CD4-positive, alpha-beta memory T cell (primary cell): ENCODE measurements at regions of chr3 and their contacts with region 1.

Region 1: DNA sequence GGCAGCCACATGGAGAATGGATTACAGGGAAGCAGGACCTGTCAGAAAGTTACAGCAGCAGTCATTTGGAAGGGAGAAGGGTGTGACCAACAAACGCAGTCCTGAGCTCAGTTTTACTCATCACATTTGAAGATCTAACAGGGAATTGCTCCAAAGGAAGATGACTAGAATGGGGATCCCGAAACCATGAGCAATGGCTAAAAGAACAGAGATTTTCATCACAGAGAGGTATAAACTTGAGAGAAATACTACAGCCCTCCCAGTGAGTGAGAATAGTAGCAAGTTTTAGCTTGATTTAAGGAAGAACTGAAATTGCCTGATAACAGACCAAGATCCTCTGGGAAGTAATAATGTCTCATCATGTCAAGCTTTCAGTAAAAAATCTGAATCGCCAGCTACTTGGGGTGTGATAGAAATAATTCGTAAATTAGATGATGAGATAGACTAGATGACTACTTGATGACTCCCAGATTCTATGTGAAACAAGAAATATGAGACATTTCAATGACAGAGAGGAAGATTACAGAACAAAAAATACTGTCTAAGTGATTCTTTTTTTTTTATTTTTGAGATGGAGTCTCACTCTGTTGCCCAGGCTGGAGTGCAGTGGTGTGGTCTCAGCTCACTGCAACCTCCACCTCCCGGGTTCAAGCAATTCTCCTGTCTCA is 16.9 kb downstream of the CD47 start:
- DNase-seq: no peak
- H3K4me3 ChIP-seq: no peak overlapping the region
- H3K4me3 Mint-ChIP-seq: peak overlapping the region in 5 of 8 donors; percentile 19 to 60 (median 29)
- H3K27ac ChIP-seq: no peak overlapping the region
- H3K27ac Mint-ChIP-seq: peak overlapping the region; percentile 28 to 83 (median 67)
- H3K4me1 ChIP-seq: peaks cover 91% of the 10 kb centered on the region
- H3K4me1 Mint-ChIP-seq: peaks cover 64 to 93% (median 69%) of the 10 kb centered on the region in 4 donors
- H3K27me3 ChIP-seq: no peaks in the 10 kb centered on the region
- H3K27me3 Mint-ChIP-seq: no peaks in the 10 kb centered on the region

Region 2: DNA sequence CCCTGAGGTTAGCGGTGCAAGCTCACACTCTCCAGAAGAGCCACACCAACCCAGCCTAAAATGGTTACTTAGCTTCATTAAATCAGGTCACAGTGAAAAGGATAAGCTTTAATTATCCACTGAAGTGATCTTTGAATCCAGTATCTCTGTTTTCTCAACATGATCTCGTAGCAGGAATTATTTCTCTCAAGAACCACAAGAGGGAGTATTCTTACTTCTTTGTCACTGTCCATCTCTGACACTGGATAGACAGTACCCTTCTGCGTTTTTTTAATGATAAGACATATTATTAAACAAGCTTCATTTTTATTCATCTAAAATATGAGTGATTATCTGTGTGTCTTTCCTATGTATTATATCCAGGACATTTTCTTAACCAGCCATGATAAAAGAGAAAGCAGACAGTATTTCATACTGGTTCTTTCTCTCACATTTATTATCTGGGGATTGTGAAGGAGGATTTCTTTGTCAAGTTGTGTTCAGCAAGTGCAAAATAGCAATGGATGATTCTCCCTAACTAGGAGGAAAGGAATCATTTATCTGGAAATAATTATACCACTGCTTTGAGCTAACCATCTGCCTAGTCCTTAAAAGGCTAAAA is 802.0 kb before region 1 on chr3:
- CTCF ChIA-PET with region 1: no interaction called
- POLR2A ChIA-PET with region 1: no interaction called
- intact Hi-C with region 1: no loop called
- DNase-seq: peak in 4 of 5 donors; percentile 15 to 27 (median 21)
- H3K4me3 ChIP-seq: no peak overlapping the region
- H3K4me3 Mint-ChIP-seq: no peak overlapping the region
- H3K27ac ChIP-seq: no peak overlapping the region
- H3K27ac Mint-ChIP-seq: no peak overlapping the region
- H3K4me1 ChIP-seq: no peaks in the 10 kb centered on the region
- H3K4me1 Mint-ChIP-seq: no peaks in the 10 kb centered on the region
- H3K27me3 ChIP-seq: no peaks in the 10 kb centered on the region
- H3K27me3 Mint-ChIP-seq: peaks cover 10 to 24% of the 10 kb centered on the region in 2 donors

Region 3: GRCh38 chr3:108040481-108040880 is 33.4 kb before region 1 on chr3:
- CTCF ChIA-PET with region 1: no interaction called
- POLR2A ChIA-PET with region 1: no interaction called
- intact Hi-C with region 1: no loop called
- DNase-seq: no peak
- H3K4me3 ChIP-seq: no peak overlapping the region
- H3K4me3 Mint-ChIP-seq: no peak overlapping the region
- H3K27ac ChIP-seq: no peak overlapping the region
- H3K27ac Mint-ChIP-seq: peak overlapping the region in 3 of 7 donors; percentile 42 to 56 (median 50)
- H3K4me1 ChIP-seq: no peaks in the 10 kb centered on the region
- H3K4me1 Mint-ChIP-seq: peaks cover 15 to 41% (median 20%) of the 10 kb centered on the region in 4 donors
- H3K27me3 ChIP-seq: no peaks in the 10 kb centered on the region
- H3K27me3 Mint-ChIP-seq: no peaks in the 10 kb centered on the region

Region 4: DNA sequence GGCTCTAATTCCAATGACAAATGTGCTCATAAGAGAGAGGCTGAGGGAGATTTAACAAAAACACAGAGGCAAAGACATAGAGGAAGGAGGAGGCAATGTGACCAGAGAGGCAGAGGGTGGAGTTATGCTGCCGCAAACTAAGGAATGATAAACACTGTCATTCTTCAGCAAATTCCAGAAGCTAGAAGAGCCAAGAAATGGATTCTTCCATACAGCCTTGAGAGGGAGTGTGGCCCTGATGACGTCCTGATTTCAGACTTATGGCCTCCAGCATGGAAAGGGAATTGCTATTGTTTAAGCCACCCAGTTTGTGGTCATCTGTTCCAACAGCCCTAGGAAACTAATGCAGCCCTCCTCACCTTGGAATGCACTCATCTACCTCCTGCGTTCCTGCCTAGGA is 13.6 kb before region 1 on chr3:
- CTCF ChIA-PET with region 1: interaction called, 3 read pairs
- POLR2A ChIA-PET with region 1: no interaction called
- intact Hi-C with region 1: loop called (anchors 2 kb)
- DNase-seq: no peak
- H3K4me3 ChIP-seq: no peak overlapping the region
- H3K4me3 Mint-ChIP-seq: peak overlapping the region in 1 of 8 donors; percentile 1
- H3K27ac ChIP-seq: no peak overlapping the region
- H3K27ac Mint-ChIP-seq: peak overlapping the region in 4 of 7 donors; percentile 2 to 70 (median 28)
- H3K4me1 ChIP-seq: peaks cover 65% of the 10 kb centered on the region
- H3K4me1 Mint-ChIP-seq: peaks cover 54 to 75% (median 60%) of the 10 kb centered on the region in 4 donors
- H3K27me3 ChIP-seq: no peaks in the 10 kb centered on the region
- H3K27me3 Mint-ChIP-seq: no peaks in the 10 kb centered on the region

Region 5: DNA sequence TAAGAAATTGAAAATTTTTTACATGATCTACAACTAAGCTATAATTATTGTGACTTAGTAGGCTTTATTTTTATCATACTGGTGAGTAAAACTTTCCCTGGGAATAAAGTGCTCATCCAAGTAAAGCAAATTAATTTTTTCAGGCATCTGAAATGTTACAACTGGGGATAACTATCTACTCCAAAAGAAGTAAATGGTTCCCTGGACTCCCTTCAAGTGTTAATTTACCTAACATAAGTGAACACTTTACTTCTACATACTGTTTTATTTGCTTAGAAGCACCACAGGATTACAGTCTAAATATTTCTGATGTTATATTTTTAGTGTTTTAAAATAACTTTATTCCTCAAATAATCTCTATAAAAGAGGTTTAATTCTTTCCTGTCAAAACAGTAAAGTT is 90.5 kb after region 1 on chr3:
- CTCF ChIA-PET with region 1: no interaction called
- POLR2A ChIA-PET with region 1: no interaction called
- intact Hi-C with region 1: no loop called
- DNase-seq: no peak
- H3K4me3 ChIP-seq: no peak overlapping the region
- H3K4me3 Mint-ChIP-seq: no peak overlapping the region
- H3K27ac ChIP-seq: no peak overlapping the region
- H3K27ac Mint-ChIP-seq: no peak overlapping the region
- H3K4me1 ChIP-seq: no peaks in the 10 kb centered on the region
- H3K4me1 Mint-ChIP-seq: peaks cover 8 to 15% (median 11%) of the 10 kb centered on the region in 4 donors
- H3K27me3 ChIP-seq: no peaks in the 10 kb centered on the region
- H3K27me3 Mint-ChIP-seq: no peaks in the 10 kb centered on the region